CD8-positive, alpha-beta T cell (primary cell): ENCODE measurements at regions of chr9 and their contacts with region 1.

Region 1: DNA sequence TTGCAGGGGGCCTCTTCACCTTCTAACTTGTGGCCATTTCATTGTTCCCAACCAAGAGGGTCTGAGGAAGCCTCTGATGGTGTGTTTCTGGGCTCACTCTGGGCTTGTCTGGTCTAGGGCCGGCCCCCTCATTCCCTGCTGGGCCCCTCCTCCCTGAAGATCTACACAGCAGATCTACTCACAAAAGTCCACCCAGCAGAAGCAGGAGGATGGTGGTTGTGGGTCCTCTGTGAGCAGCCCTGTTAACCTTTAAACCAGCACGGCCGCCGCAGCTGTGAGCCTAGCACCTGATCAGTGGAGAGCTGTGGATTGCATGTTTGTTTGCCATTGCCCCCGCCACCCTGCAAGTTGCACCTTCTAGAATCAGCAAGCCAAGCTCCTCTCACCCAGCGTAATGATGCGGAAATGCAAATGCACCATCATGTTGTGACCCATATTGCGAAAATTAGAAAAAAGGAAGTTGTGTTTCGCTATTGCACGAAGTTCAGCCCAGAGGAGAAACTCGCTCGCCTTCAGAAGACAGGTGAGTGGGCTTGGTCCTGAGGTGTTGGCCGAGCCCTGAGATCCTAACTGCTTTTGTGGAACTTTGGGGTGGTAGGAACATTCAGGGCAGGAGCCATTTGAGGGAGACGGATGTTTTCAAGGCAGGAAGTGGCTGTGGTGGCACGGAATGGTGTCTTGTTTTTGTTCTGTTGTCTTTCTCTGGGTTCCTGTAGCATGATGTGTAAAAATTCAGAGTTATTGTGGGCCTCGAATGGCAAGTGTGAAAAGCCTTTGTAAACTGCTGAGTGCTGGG is 16.7 kb downstream of the FGD3 start:
- DNase-seq: peak; percentile 64 to 94 (median 82)
- ATAC-seq: peak; percentile 74
- H3K4me3 ChIP-seq: peak overlapping the region; percentile 59 to 81
- H3K4me3 Mint-ChIP-seq: peak overlapping the region; percentile 91
- H3K27ac ChIP-seq: peak overlapping the region; percentile 91 to 94
- H3K27ac Mint-ChIP-seq: peak overlapping the region; percentile 100
- H3K4me1 ChIP-seq: peaks cover 62% of the 10 kb centered on the region
- H3K4me1 Mint-ChIP-seq: peaks cover 60% of the 10 kb centered on the region
- H3K27me3 ChIP-seq: no peaks in the 10 kb centered on the region
- H3K27me3 Mint-ChIP-seq: no peaks in the 10 kb centered on the region
- CTCF ChIP-seq: no peak

Region 2: DNA sequence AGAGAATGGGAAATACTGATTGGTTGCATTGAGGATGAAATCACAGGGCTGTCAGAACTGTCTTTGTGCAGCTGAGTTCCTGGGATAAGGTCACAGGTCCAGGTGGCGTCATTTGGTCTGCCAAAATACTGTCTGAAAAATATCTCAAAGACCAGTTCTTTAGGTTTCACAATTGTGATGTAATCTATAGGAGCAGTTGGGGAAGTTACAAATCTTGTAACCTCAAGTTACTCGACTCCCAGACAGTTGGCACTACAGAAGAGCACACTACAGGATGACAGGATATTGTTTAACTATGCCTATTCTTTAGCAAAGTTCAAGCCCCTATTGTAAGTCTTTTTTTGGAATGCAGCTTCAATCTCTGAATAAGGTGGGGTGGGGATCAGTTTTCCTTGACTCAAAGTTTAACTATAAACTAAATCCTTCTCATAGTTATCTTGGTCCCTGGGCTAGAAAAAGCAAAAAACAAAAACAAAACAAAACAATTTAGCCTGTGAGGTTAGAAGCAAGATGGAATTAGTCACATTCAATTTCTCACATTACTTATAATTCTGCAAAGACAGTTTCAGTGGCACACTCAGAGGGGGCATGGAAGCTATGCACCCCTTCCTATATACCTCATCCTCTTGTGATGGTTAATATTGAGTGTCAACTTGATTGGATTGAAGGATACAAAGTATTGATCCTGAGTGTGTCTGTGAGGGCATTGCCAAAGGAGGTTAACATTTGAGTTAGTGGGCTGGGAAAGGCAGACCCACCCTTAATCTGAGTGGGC is 1878.3 kb before region 1 on chr9:
- CTCF ChIA-PET with region 1: no interaction called
- POLR2A ChIA-PET with region 1: no interaction called
- intact Hi-C with region 1: no loop called
- DNase-seq: peak in 1 of 9 experiments; percentile 15
- ATAC-seq: no peak
- H3K4me3 ChIP-seq: no peak overlapping the region
- H3K4me3 Mint-ChIP-seq: no peak overlapping the region
- H3K27ac ChIP-seq: no peak overlapping the region
- H3K27ac Mint-ChIP-seq: no peak overlapping the region
- H3K4me1 ChIP-seq: no peaks in the 10 kb centered on the region
- H3K4me1 Mint-ChIP-seq: no peaks in the 10 kb centered on the region
- H3K27me3 ChIP-seq: no peaks in the 10 kb centered on the region
- H3K27me3 Mint-ChIP-seq: peaks cover 3% of the 10 kb centered on the region
- CTCF ChIP-seq: no peak

Region 3: DNA sequence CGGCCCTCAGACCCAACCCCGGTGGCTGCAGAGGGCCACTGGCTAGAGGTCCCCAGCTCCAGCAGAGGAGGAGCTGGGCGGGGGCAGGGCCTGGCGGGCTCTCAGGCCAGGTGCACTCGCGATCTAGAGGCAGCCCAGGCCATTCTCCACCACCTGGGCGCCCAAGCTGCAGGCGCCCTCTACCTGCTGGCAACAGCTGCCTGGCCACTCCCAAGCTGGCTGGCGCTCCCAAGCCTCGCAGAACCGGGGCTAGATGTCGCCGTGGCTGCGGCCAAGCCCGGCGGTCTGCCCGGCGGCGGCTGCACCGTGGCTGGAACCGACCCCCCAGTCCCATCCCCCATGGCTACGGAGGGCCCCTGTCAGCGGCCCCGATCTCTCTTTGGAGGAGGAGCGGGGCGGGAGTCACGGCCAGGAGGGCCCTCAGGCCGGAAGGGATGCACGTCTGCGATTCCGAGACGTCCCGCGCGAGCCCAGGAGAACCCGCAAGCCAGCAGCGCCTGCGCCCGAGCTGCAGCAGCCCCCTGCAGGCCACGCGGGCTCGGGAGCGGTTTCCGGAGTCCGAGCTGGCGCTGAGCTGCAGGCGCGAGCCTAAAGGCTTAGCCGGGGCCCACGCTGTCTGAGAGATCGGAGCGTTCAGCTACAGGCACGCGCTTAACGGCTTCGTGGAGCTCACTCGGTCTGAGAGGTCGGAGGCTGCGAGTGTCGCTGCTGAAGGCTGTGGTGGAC is 155.1 kb before region 1 on chr9:
- CTCF ChIA-PET with region 1: no interaction called
- POLR2A ChIA-PET with region 1: interaction called, 4 read pairs
- intact Hi-C with region 1: loop called in 1 of 2 experiments (anchors 2 kb)
- DNase-seq: peak in 7 of 9 experiments; percentile 34 to 70 (median 51)
- ATAC-seq: peak; percentile 54
- H3K4me3 ChIP-seq: peak overlapping the region; percentile 45 to 59
- H3K4me3 Mint-ChIP-seq: peak overlapping the region; percentile 85
- H3K27ac ChIP-seq: no peak overlapping the region
- H3K27ac Mint-ChIP-seq: no peak overlapping the region
- H3K4me1 ChIP-seq: peaks cover 23% of the 10 kb centered on the region
- H3K4me1 Mint-ChIP-seq: peaks cover 18% of the 10 kb centered on the region
- H3K27me3 ChIP-seq: peaks cover 42 to 52% of the 10 kb centered on the region in 2 experiments
- H3K27me3 Mint-ChIP-seq: peaks cover 44% of the 10 kb centered on the region
- CTCF ChIP-seq: no peak

Region 4: GRCh38 chr9:92911511-92912475 is 52.2 kb before region 1 on chr9:
- CTCF ChIA-PET with region 1: no interaction called
- POLR2A ChIA-PET with region 1: no interaction called
- intact Hi-C with region 1: no loop called
- DNase-seq: no peak
- ATAC-seq: no peak
- H3K4me3 ChIP-seq: no peak overlapping the region
- H3K4me3 Mint-ChIP-seq: no peak overlapping the region
- H3K27ac ChIP-seq: no peak overlapping the region
- H3K27ac Mint-ChIP-seq: no peak overlapping the region
- H3K4me1 ChIP-seq: no peaks in the 10 kb centered on the region
- H3K4me1 Mint-ChIP-seq: peaks cover 5% of the 10 kb centered on the region
- H3K27me3 ChIP-seq: peaks cover 0 to 5% of the 10 kb centered on the region in 2 experiments
- H3K27me3 Mint-ChIP-seq: peaks cover 3% of the 10 kb centered on the region
- CTCF ChIP-seq: no peak

Region 5: DNA sequence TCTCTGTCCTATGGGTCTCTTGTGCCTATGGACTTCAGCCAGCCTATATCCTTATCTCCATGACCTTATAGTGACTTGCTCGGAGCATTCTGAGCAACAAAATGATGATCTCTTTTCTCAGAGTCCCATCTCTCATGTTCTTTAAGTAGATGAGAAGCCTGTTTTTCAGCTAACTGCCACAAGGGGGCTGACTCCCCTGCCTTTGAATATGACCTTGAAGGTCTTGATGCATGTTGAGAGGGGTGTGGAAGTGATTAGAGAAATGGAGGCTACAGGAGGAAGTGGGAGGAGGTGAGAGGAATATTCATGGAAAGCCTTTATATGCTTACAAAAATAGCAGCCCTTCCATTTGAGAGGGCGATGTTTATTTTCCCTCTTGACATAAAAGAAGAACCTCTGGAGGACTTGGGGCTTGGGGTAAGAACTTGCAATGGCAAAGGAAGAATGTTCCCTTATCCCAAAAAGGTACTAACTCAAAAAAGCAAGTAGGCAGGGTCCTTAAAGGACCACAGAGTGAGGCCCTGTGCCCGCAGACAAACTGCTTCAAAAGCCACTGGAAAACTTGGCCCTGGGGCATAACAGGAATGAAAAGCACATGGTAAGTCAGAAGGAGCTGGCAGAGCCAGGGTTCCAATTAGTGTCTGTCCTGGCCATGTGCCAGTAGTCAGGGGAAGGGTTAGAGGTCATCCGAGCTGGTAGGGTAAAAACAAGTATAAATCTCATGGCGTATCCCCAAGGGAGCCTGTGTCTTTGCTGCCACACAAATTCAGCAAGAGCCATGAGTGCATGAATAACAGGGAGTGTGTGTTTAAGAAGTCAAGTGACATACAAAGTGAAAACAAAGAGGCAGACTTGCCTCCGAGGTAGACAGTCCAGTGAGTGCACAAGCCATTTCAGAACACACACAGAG is 22.4 kb after region 1 on chr9:
- CTCF ChIA-PET with region 1: interaction called, 5 read pairs
- POLR2A ChIA-PET with region 1: interaction called, 7 read pairs
- intact Hi-C with region 1: loop called in 1 of 2 experiments (anchors 2 kb)
- DNase-seq: peak in 7 of 9 experiments; percentile 22 to 80 (median 67)
- ATAC-seq: peak; percentile 76
- H3K4me3 ChIP-seq: no peak overlapping the region
- H3K4me3 Mint-ChIP-seq: peak overlapping the region; percentile 6
- H3K27ac ChIP-seq: peak overlapping the region; percentile 14 to 59
- H3K27ac Mint-ChIP-seq: peak overlapping the region; percentile 86
- H3K4me1 ChIP-seq: peaks cover 73% of the 10 kb centered on the region
- H3K4me1 Mint-ChIP-seq: peaks cover 83% of the 10 kb centered on the region
- H3K27me3 ChIP-seq: no peaks in the 10 kb centered on the region
- H3K27me3 Mint-ChIP-seq: no peaks in the 10 kb centered on the region
- CTCF ChIP-seq: peak; percentile 73

Region 6: DNA sequence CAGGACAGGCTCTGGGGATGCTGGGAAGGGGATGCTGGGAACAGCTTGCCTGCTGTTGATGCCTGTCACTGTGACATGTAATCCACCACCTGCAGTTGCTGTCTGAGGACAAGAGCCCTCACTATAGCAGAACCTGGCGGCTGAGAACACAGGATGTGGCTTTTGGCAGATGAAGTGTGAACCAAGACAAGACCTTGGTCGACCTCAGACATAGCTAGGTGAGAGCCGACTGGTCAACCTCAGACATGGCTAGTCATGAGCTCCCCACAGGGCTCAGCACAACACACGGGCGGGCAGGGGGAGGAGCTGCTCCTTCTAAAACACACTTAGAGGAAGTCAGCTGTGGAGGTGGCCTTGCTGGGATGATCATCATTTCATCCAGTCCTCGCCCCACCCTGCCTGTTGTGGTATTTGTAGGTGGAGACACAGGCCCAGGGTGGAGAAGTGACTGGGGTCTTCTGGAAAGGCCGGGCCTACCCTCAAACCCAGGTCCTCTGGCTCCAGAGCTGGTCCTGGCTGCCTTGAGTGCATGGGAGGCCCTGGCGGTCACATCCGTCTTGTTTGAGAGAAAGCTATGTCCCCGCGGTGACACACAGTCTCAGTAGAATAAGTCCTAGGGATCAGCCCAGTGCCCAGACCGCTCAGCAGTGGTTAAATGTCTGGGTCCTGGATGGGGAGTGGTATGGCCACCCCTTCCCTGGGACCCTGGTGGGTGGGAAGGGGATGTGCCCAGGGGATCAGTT is 100.5 kb after region 1 on chr9:
- CTCF ChIA-PET with region 1: no interaction called
- POLR2A ChIA-PET with region 1: interaction called, 41 read pairs
- intact Hi-C with region 1: loop called (anchors 1 kb)
- DNase-seq: peak; percentile 78 to 97 (median 89)
- ATAC-seq: peak; percentile 89
- H3K4me3 ChIP-seq: peak overlapping the region; percentile 24 to 91
- H3K4me3 Mint-ChIP-seq: peak overlapping the region; percentile 83
- H3K27ac ChIP-seq: peak overlapping the region; percentile 70 to 83
- H3K27ac Mint-ChIP-seq: peak overlapping the region; percentile 100
- H3K4me1 ChIP-seq: peaks cover 94% of the 10 kb centered on the region
- H3K4me1 Mint-ChIP-seq: peaks cover 88% of the 10 kb centered on the region
- H3K27me3 ChIP-seq: no peaks in the 10 kb centered on the region
- H3K27me3 Mint-ChIP-seq: no peaks in the 10 kb centered on the region
- CTCF ChIP-seq: no peak